HepG2 (cell line): ENCODE measurements at regions of chr14 and their contacts with region 1.

Region 1: DNA sequence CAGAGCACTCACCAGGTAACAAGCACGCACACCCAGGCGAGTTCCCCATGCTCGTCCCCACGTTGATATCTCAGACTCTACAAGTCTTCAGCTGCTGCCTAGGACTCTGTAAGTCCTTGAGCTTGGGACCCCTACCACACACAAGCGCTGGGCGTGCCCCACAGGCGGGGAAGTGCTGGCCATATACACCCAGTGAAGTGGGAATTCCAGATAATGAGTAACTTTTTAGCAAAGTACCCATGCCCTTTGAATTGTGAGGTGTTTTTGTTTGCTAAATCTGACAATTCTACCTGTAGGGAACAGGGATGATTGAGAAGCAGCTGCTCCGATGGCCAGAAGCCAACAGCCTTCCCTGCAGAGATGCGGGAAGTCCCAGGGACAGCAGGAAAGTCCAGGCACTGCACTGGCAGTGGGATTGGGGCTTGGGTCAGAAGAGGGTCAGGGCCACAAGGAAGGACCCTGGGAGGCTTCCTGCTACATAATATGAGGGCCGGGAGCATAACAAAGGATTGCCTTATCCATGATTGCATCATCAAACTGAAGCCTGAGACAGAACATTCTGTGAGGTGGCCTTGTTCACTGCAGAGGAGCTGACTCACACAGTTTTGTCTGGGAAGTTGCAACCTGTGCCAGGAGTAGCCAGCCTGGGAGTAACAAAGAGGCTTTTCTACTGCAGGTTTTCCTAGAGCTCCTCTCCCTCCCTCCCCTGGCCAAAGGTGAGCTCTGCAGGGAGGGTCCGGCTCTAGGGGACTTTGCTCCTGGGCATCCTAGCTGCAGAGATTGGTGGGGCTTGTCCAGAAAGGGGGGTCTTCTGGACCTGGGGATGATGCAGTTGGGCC is 13.2 kb upstream of the SERPINA3 start:
- DNase-seq: peak; percentile 100
- ATAC-seq: peak; percentile 77
- H3K4me3 ChIP-seq: peak overlapping the region; percentile 52 to 68 (median 56)
- H3K27ac ChIP-seq: peak overlapping the region; percentile 96
- H3K4me1 ChIP-seq: peaks cover 97% of the 10 kb centered on the region
- H3K27me3 ChIP-seq: no peaks in the 10 kb centered on the region
- CTCF ChIP-seq: peak; percentile 42
- EP300 ChIP-seq: peak; percentile 95 to 99
- POLR2A ChIP-seq: peak; percentile 53 to 65
- RAD21 ChIP-seq: peak; percentile 49

Region 2: GRCh38 chr14:93137864-93138263 is 1461.2 kb before region 1 on chr14:
- CTCF ChIA-PET with region 1: no interaction called
- POLR2A ChIA-PET with region 1: no interaction called
- in situ Hi-C with region 1: no loop called
- intact Hi-C with region 1: loop called (anchors 5 kb)
- DNase-seq: peak; percentile 56
- ATAC-seq: peak; percentile 75
- H3K4me3 ChIP-seq: no peak overlapping the region; a peak in 1 of 6 replicates
- H3K27ac ChIP-seq: no peak overlapping the region
- H3K4me1 ChIP-seq: peaks cover 48% of the 10 kb centered on the region
- H3K27me3 ChIP-seq: no peaks in the 10 kb centered on the region; a peak in 1 of 5 replicates
- CTCF ChIP-seq: peak; percentile 35; the same call in 1 of the 2 replicates
- EP300 ChIP-seq: no peak
- POLR2A ChIP-seq: no peak
- RAD21 ChIP-seq: no peak

Region 3: DNA sequence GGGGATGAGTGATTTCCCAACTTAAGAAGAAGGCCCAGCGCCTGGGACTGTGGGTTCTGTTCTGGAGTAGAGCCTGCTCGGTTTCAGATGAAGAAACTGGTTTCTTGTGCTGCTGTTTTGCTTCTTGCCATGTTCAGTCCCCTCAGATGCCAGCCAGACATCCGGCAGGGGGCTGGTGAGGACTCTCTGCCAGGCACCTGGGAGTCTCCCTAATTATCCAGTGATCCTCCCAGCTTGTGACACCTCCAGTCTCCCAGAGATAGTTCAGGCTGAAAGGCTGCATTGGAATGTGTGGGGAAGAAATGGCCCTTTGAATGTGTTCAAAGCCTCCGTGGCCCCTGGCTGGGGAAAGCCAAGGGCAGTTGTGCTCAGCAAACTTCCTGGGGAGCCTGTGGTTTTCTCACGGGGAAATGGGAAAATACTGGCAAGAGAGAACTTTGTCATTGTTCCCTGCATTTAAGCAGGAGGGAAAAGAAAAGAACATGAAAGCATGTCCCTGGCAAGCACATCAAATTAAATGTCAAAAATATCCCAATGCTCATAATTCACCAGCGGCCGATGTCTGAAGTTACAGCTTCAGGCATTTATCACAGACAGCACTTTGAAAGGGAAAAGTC is 81.3 kb before region 1 on chr14:
- CTCF ChIA-PET with region 1: no interaction called
- POLR2A ChIA-PET with region 1: interaction called, 14 read pairs
- in situ Hi-C with region 1: no loop called
- intact Hi-C with region 1: no loop called
- DNase-seq: peak; percentile 77
- ATAC-seq: peak; percentile 9; the same call in 2 of the 3 replicates
- H3K4me3 ChIP-seq: peak overlapping the region in 1 of 3 experiments; percentile 14; a peak in 1 of 6 replicates
- H3K27ac ChIP-seq: peak overlapping the region; percentile 44
- H3K4me1 ChIP-seq: peaks cover 92% of the 10 kb centered on the region
- H3K27me3 ChIP-seq: no peaks in the 10 kb centered on the region
- CTCF ChIP-seq: no peak
- EP300 ChIP-seq: peak in 1 of 2 experiments; percentile 80; a peak in 2 of 4 replicates
- POLR2A ChIP-seq: no peak
- RAD21 ChIP-seq: no peak

Region 4: DNA sequence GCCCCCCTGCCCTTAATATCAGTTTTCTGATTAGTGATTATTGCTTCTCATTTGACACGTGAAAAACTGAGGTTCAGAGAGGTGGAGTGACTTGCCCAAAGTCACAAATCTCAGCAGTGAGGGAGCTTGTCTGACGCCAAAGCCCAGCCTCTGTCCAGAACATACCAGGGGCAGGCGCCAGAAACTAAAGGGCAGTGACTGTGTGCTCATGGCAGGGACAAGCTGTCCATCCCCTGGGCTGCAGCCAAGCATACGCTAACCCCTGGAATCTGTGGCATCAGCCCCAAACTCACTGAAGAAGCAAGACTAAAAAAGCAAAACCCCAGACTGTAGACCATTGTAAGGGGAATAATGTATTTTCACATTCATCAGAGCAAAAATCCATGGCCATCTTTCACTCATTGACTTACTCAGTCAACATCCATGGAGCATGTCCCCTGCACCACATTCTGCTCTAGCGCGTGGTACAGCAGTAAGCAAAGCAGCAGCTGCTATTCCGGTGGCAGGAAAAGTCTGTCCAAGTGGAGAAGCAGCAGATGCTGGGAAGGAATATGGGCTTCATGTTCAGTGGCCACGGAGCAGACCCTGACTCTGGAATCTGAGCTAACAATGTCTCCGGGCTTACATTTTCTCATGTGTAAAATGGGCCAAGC is 39.3 kb before region 1 on chr14:
- CTCF ChIA-PET with region 1: no interaction called
- POLR2A ChIA-PET with region 1: interaction called, 51 read pairs
- in situ Hi-C with region 1: no loop called
- intact Hi-C with region 1: loop called (anchors 5 kb)
- DNase-seq: no peak
- ATAC-seq: no peak
- H3K4me3 ChIP-seq: no peak overlapping the region
- H3K27ac ChIP-seq: no peak overlapping the region
- H3K4me1 ChIP-seq: peaks cover 64% of the 10 kb centered on the region
- H3K27me3 ChIP-seq: no peaks in the 10 kb centered on the region
- CTCF ChIP-seq: no peak
- EP300 ChIP-seq: no peak
- POLR2A ChIP-seq: no peak
- RAD21 ChIP-seq: no peak

Region 5: DNA sequence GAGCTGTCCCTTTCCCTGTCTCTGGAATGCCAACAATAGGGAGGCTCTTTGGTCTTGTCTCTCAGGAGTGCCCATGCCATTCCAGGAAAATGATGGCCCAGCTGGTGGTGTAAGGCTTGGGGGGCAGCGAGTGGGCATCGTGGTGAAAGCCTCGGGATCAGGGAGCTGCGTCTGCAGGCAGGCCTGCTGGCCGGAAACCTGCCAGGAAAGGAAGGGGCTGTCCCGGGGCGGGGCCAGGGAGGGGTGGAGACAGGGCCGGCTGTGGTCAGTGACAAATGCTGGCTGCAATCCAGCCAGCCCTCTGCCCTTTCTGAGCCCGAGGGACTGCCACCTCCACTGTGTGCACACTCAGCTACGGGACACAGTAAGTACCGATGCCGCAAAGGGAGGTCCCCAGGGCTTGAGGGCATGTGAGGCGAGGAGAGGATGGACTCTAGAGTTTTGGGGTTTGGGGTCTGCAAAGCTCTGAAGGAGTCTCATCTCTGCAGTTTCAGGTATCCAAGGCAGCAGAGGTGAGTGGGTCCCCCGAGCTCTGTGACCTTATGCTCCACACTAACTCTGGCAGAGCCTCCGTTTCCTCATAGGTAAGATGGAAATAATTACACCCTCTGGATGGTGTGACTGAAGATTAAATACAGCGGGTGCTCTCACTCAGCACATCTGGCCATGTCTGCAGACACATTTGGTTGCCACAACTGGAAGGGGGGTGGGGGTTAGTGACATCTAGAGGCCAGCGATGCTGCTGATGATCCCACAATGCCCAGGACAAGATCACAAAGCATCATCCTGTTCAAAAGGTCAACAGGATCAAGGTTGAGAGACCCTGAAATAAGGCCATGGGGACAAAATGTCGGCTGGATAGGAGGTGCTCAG is 17.7 kb before region 1 on chr14 and contains the start of gene SERPINA5:
- CTCF ChIA-PET with region 1: no interaction called
- POLR2A ChIA-PET with region 1: interaction called, 169 read pairs
- in situ Hi-C with region 1: no loop called
- intact Hi-C with region 1: loop called (anchors 2 kb)
- DNase-seq: peak; percentile 83
- ATAC-seq: peak; percentile 95
- H3K4me3 ChIP-seq: peak within 1 kb of the TSS; percentile 61 to 88 (median 75)
- H3K27ac ChIP-seq: peak within 1 kb of the TSS; percentile 88
- H3K4me1 ChIP-seq: peaks cover 75% of the 10 kb centered on the region
- H3K27me3 ChIP-seq: no peaks in the 10 kb centered on the region; a peak in 1 of 5 replicates
- CTCF ChIP-seq: peak; percentile 54
- EP300 ChIP-seq: peak in 1 of 2 experiments; percentile 46; a peak in 2 of 4 replicates
- POLR2A ChIP-seq: peak; percentile 83 to 92
- RAD21 ChIP-seq: peak; percentile 37; the same call in 1 of the 2 replicates
- total RNA-seq, gene SERPINA5: 237 and 498 TPM in 2 replicates

Region 6: GRCh38 chr14:94636522-94637412 is 37.7 kb after region 1 on chr14:
- CTCF ChIA-PET with region 1: no interaction called
- POLR2A ChIA-PET with region 1: interaction called, 22 read pairs
- in situ Hi-C with region 1: no loop called
- intact Hi-C with region 1: no loop called
- DNase-seq: peak; percentile 80
- ATAC-seq: peak; percentile 74
- H3K4me3 ChIP-seq: peak overlapping the region in 1 of 3 experiments; percentile 39; a peak in 1 of 6 replicates
- H3K27ac ChIP-seq: peak overlapping the region; percentile 52
- H3K4me1 ChIP-seq: peaks cover 92% of the 10 kb centered on the region
- H3K27me3 ChIP-seq: no peaks in the 10 kb centered on the region
- CTCF ChIP-seq: peak; percentile 84
- EP300 ChIP-seq: peak in 1 of 2 experiments; percentile 94; a peak in 2 of 4 replicates
- POLR2A ChIP-seq: no peak
- RAD21 ChIP-seq: no peak; the same call in none of the 2 replicates

Region 7: GRCh38 chr14:94681300-94682060 is 82.4 kb after region 1 on chr14:
- CTCF ChIA-PET with region 1: no interaction called
- POLR2A ChIA-PET with region 1: interaction called, 13 read pairs
- in situ Hi-C with region 1: no loop called
- intact Hi-C with region 1: loop called (anchors 2 kb)
- DNase-seq: peak; percentile 78
- ATAC-seq: peak; percentile 78
- H3K4me3 ChIP-seq: no peak overlapping the region; a peak in 1 of 6 replicates
- H3K27ac ChIP-seq: peak overlapping the region; percentile 80
- H3K4me1 ChIP-seq: peaks cover 66% of the 10 kb centered on the region
- H3K27me3 ChIP-seq: peaks cover 5 to 9% of the 10 kb centered on the region in 2 experiments; a peak in 3 of 5 replicates
- CTCF ChIP-seq: peak; percentile 95
- EP300 ChIP-seq: 0 out of 4 replicates have a peak, but pooled peaks of 1 of the 2 experiments have one; percentile 40
- POLR2A ChIP-seq: no peak
- RAD21 ChIP-seq: peak; percentile 90

Region 8: GRCh38 chr14:95085326-95085725 is 486.3 kb after region 1 on chr14:
- CTCF ChIA-PET with region 1: no interaction called
- POLR2A ChIA-PET with region 1: no interaction called
- in situ Hi-C with region 1: no loop called
- intact Hi-C with region 1: no loop called
- DNase-seq: no peak
- ATAC-seq: no peak
- H3K4me3 ChIP-seq: no peak overlapping the region
- H3K27ac ChIP-seq: no peak overlapping the region
- H3K4me1 ChIP-seq: peaks cover 26% of the 10 kb centered on the region
- H3K27me3 ChIP-seq: no peaks in the 10 kb centered on the region
- CTCF ChIP-seq: no peak
- EP300 ChIP-seq: no peak
- POLR2A ChIP-seq: no peak
- RAD21 ChIP-seq: no peak